Heart right ventricle (tissue), 16 donors: ENCODE measurements at regions of chr2 and their contacts with region 1.

Region 1: DNA sequence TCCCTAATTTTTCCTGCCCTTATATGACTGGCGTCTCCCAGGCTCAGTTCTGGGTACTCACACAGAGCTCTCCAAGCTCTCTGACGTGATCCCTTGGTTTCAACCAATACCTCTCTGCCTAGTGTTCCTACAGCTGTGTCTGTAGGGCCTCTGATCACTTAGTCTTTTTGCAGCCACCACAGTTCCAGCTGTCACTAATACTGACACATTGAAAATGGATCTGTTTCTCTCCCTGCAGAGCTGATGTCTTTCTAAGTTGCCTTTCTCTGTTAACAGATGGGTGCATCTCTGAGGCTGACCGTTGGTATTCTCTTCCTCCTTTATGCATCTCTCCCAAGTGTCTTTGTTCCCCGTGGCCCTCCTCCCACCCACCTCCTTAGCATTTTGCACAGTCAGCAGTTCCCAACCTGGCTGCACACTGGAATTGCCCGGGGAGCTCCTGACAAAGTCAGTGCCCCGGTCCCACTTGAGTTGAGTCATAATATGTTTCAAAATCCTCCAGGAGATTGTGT is 62.5 kb downstream of the CERS6 start:
- DNase-seq: peak in 1 of 2 donors; percentile 17
- ATAC-seq: peak in 7 of 8 donors; percentile 38 to 90 (median 84)
- H3K4me3 ChIP-seq: no peak overlapping the region
- H3K27ac ChIP-seq: peak overlapping the region in 8 of 10 donors; percentile 5 to 65 (median 58)
- H3K4me1 ChIP-seq: peaks cover 0 to 77% (median 45%) of the 10 kb centered on the region in 9 donors
- H3K27me3 ChIP-seq: no peaks in the 10 kb centered on the region
- CTCF ChIP-seq: no peak

Region 2: GRCh38 chr2:166917415-166917814 is 1601.2 kb before region 1 on chr2:
- intact Hi-C with region 1: no loop called
- DNase-seq: no peak
- ATAC-seq: no peak
- H3K4me3 ChIP-seq: no peak overlapping the region
- H3K27ac ChIP-seq: no peak overlapping the region
- H3K4me1 ChIP-seq: no peaks in the 10 kb centered on the region
- H3K27me3 ChIP-seq: no peaks in the 10 kb centered on the region
- CTCF ChIP-seq: no peak

Region 3: DNA sequence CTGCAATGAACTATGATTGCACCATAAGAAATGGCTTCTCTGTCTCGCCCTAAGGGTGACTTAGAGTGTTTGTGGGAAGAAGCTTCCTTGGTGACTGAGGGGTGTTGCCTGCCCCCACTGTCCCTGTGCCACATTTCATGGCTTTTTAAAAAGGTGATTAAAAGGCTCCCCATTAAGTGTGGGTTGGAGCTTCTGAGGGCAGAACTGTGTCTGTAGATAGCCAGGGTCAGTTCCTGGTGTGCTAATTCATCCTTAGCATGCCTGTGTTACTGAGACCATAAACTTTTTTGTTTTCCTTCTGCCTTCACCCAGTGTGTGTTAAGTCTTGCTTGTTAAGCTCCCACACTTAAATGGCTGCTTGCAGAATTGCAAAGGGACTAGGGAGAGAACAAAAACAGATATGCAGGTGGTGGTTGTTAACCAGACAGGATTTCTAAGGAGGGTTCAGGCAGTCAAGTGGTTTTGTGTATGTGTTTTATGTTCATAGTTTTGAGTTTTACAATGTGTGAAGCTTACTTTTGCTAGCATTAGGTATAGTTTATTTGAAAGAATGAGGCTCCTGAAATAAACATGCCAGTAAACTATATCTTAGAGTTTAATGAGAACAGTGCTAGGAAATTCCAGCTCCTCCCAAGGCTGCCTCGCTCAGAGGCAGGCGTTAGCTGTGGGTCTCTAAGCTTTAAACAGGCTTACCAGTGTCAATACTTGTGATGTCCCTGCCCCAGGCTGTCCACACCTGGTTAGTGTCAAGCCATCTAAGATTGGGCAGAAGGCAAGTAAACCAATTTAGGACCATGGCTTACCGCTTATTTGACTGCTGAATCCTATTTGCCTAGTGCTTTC is 48.1 kb before region 1 on chr2:
- intact Hi-C with region 1: loop called in 2 of 10 experiments (anchors 5 kb)
- DNase-seq: no peak
- ATAC-seq: peak in 6 of 8 donors; percentile 41 to 68 (median 48)
- H3K4me3 ChIP-seq: no peak overlapping the region
- H3K27ac ChIP-seq: peak overlapping the region in 2 of 10 donors; percentile 9 to 19
- H3K4me1 ChIP-seq: peaks cover 6 to 61% (median 41%) of the 10 kb centered on the region in 9 donors
- H3K27me3 ChIP-seq: no peaks in the 10 kb centered on the region
- CTCF ChIP-seq: no peak

Region 4: DNA sequence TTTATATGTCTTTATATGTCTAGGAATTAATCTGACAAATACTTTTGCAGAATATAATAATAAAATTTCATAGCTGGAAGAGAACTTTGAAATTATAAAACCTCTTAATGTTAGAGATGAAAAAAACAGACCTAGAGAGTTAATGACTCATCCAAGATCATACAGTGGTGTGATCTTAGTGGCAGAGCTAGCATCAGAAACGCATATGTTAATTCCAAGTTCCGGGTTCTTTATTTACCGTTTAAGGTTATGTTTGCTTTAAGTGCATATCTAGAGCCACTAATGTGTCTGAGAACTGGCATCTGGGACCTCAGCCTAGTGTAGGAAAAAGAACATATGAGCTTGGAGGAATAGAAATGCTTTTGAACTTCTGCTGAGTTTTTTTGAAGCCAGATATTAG is 38.3 kb before region 1 on chr2:
- intact Hi-C with region 1: loop called in 1 of 10 experiments (anchors 5 kb)
- DNase-seq: no peak
- ATAC-seq: no peak
- H3K4me3 ChIP-seq: no peak overlapping the region
- H3K27ac ChIP-seq: no peak overlapping the region
- H3K4me1 ChIP-seq: peaks cover 2 to 41% (median 25%) of the 10 kb centered on the region in 9 donors
- H3K27me3 ChIP-seq: no peaks in the 10 kb centered on the region
- CTCF ChIP-seq: no peak

Region 5: GRCh38 chr2:168573128-168573903 is 54.7 kb after region 1 on chr2:
- intact Hi-C with region 1: no loop called
- DNase-seq: peak in 1 of 2 donors; percentile 36
- ATAC-seq: no peak
- H3K4me3 ChIP-seq: no peak overlapping the region
- H3K27ac ChIP-seq: peak overlapping the region in 1 of 10 donors; percentile 34
- H3K4me1 ChIP-seq: peaks cover 6 to 52% (median 26%) of the 10 kb centered on the region in 9 donors
- H3K27me3 ChIP-seq: no peaks in the 10 kb centered on the region
- CTCF ChIP-seq: no peak

Region 6: DNA sequence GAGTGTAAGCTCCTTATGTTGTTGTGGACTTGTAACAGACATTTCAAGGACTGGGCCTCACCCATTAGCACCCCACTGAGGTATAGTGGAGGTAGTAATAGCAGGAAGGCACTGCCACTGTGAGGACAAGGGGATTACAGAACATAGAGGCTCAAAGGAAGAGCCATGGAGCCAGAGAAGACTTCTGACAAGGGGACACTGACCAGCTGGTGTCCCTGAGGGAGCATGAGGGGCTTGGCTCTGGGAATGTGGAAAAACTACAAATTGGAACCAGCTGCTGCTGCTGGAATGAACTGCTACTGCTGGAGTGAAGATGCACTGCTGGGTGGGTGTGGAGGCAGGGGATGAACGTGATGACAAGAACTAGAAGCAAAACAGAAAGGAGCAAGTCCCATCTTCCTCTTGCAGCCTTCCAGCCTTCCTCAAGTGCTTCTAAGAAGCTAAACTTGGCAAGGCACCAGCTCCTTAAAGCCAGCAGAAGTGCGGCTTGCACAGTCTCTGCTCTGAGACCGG is 116.5 kb after region 1 on chr2:
- intact Hi-C with region 1: loop called in 1 of 10 experiments (anchors 10 kb)
- DNase-seq: peak; percentile 31 to 76
- ATAC-seq: peak; percentile 32 to 72 (median 54)
- H3K4me3 ChIP-seq: peak overlapping the region in 1 of 10 donors; percentile 7
- H3K27ac ChIP-seq: peak overlapping the region in 8 of 10 donors; percentile 11 to 87 (median 77)
- H3K4me1 ChIP-seq: peaks cover 9 to 76% (median 59%) of the 10 kb centered on the region in 9 donors
- H3K27me3 ChIP-seq: no peaks in the 10 kb centered on the region
- CTCF ChIP-seq: no peak

Region 7: GRCh38 chr2:169933124-169933711 is 1414.6 kb after region 1 on chr2:
- intact Hi-C with region 1: no loop called
- DNase-seq: no peak
- ATAC-seq: peak in 3 of 8 donors; percentile 38 to 67 (median 65)
- H3K4me3 ChIP-seq: no peak overlapping the region
- H3K27ac ChIP-seq: no peak overlapping the region
- H3K4me1 ChIP-seq: peaks cover 0 to 4% (median 0%) of the 10 kb centered on the region in 9 donors
- H3K27me3 ChIP-seq: no peaks in the 10 kb centered on the region
- CTCF ChIP-seq: peak; percentile 38 to 70 (median 63)